Activated CD8-positive, alpha-beta T cell treated with anti-CD3 and anti-CD28 coated beads for 36 hours (primary cell): ENCODE measurements at regions of chr13 and their contacts with region 1.

Region 1: GRCh38 chr13:30395192-30396084 is 26.9 kb upstream of the UBE2L5 start:
- DNase-seq: peak; percentile 89
- ATAC-seq: peak; percentile 51
- H3K4me3 Mint-ChIP-seq: peak overlapping the region; percentile 78
- H3K27ac Mint-ChIP-seq: peak overlapping the region; percentile 94
- H3K4me1 Mint-ChIP-seq: peaks cover 30% of the 10 kb centered on the region
- H3K27me3 Mint-ChIP-seq: no peaks in the 10 kb centered on the region
- CTCF ChIP-seq: no peak

Region 2: GRCh38 chr13:30355384-30355699 is 40.1 kb before region 1 on chr13:
- CTCF ChIA-PET with region 1: interaction called, 11 read pairs
- POLR2A ChIA-PET with region 1: no interaction called
- intact Hi-C with region 1: no loop called
- DNase-seq: peak; percentile 73
- ATAC-seq: peak; percentile 96
- H3K4me3 Mint-ChIP-seq: no peak overlapping the region
- H3K27ac Mint-ChIP-seq: no peak overlapping the region
- H3K4me1 Mint-ChIP-seq: peaks cover 16% of the 10 kb centered on the region
- H3K27me3 Mint-ChIP-seq: no peaks in the 10 kb centered on the region
- CTCF ChIP-seq: peak; percentile 64

Region 3: DNA sequence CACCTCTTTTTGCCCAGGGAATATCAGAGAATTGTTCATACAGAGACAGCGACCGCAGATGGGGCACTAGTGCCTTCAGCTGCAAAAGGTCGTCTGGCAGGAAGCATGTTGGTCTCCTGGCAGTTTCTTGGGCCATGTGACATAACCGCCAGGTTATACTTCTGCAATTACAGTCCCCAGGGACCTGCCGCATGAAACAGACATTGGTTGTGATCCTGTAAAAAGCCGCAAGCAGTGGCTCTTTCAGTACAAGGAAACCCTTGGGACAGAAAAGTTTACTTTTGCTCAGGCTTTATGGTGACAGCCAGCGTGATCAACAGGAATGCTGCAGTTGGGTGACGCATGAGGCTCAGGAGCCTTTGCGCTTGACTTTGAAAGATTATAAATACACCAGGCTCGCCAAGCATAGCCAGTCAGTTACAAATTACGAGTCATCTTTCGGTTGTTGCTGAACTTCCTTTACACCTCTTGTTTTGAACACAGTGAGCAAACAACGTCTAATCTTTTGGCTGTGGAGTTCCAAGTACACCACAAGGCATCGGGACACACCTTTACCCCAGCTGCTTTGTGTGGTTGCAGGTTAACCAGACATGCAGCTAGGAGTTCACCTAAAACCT is 23.7 kb before region 1 on chr13:
- CTCF ChIA-PET with region 1: interaction called, 7 read pairs
- POLR2A ChIA-PET with region 1: interaction called, 7 read pairs
- intact Hi-C with region 1: loop called (anchors 2 kb)
- DNase-seq: peak; percentile 78
- ATAC-seq: peak; percentile 64
- H3K4me3 Mint-ChIP-seq: peak overlapping the region; percentile 34
- H3K27ac Mint-ChIP-seq: peak overlapping the region; percentile 85
- H3K4me1 Mint-ChIP-seq: peaks cover 78% of the 10 kb centered on the region
- H3K27me3 Mint-ChIP-seq: no peaks in the 10 kb centered on the region
- CTCF ChIP-seq: no peak

Region 4: GRCh38 chr13:30382836-30383525 is 12.5 kb before region 1 on chr13:
- CTCF ChIA-PET with region 1: interaction called, 12 read pairs
- POLR2A ChIA-PET with region 1: interaction called, 10 read pairs
- intact Hi-C with region 1: no loop called
- DNase-seq: no peak
- ATAC-seq: peak; percentile 39
- H3K4me3 Mint-ChIP-seq: no peak overlapping the region
- H3K27ac Mint-ChIP-seq: no peak overlapping the region
- H3K4me1 Mint-ChIP-seq: peaks cover 31% of the 10 kb centered on the region
- H3K27me3 Mint-ChIP-seq: no peaks in the 10 kb centered on the region
- CTCF ChIP-seq: no peak

Region 5: DNA sequence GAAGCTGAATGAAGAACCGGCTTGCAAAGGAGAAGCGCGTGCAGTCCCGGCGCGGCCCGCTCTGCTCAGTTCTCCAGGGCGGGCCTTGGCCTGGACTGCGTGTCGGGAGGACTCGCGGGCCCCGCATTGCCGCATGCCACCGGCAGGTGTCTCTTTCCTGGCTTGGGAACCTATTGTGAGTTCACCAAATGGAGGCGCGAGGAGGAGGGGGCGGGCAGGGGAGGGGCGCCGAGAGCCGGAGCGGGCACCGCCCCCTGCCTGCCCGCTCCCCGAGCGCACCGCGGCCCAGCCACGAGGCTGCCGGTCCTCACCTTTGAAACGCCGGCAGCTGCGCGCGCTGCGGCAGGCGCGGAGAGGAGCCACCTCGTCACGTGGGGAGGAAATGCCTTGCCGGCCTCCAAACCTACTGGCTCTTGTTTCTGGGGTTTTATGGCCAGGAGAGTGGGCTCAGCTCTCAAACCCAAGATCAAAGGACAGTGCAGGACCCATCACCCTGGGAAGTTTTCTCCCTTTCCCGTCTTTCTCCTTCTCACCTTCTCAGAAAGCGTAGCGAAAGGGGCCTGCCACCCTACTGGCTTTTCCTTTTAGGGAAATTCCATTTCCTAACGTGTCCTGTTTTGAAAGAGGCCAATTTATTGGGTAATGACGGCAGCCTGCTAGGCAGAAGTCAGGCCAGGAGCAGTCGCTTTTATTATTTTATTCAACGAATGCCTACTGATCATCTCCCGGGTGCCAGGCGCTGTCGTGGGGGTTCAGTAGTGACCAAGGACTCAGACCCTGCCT is 13.1 kb after region 1 on chr13:
- CTCF ChIA-PET with region 1: interaction called, 19 read pairs
- POLR2A ChIA-PET with region 1: interaction called, 4 read pairs
- intact Hi-C with region 1: no loop called
- DNase-seq: peak; percentile 95
- ATAC-seq: peak; percentile 97
- H3K4me3 Mint-ChIP-seq: peak overlapping the region; percentile 49
- H3K27ac Mint-ChIP-seq: peak overlapping the region; percentile 64
- H3K4me1 Mint-ChIP-seq: peaks cover 23% of the 10 kb centered on the region
- H3K27me3 Mint-ChIP-seq: no peaks in the 10 kb centered on the region
- CTCF ChIP-seq: peak; percentile 72